ENCODE measurements at regions of chr21 and their contacts with region 1.

Region 1: GRCh38 chr21:38989745-38990423 is 184.2 kb downstream of the ETS2 start:
- DNase-seq: peak in 2 of 3 donors; percentile 65 to 75
- H3K4me3 ChIP-seq: peak overlapping the region in 2 of 7 experiments; percentile 6 to 7
- H3K27ac ChIP-seq: peak overlapping the region; percentile 98 to 99
- H3K4me1 ChIP-seq: peaks cover 39 to 98% (median 96%) of the 10 kb centered on the region in 4 experiments
- H3K27me3 ChIP-seq: no peaks in the 10 kb centered on the region

Region 2: DNA sequence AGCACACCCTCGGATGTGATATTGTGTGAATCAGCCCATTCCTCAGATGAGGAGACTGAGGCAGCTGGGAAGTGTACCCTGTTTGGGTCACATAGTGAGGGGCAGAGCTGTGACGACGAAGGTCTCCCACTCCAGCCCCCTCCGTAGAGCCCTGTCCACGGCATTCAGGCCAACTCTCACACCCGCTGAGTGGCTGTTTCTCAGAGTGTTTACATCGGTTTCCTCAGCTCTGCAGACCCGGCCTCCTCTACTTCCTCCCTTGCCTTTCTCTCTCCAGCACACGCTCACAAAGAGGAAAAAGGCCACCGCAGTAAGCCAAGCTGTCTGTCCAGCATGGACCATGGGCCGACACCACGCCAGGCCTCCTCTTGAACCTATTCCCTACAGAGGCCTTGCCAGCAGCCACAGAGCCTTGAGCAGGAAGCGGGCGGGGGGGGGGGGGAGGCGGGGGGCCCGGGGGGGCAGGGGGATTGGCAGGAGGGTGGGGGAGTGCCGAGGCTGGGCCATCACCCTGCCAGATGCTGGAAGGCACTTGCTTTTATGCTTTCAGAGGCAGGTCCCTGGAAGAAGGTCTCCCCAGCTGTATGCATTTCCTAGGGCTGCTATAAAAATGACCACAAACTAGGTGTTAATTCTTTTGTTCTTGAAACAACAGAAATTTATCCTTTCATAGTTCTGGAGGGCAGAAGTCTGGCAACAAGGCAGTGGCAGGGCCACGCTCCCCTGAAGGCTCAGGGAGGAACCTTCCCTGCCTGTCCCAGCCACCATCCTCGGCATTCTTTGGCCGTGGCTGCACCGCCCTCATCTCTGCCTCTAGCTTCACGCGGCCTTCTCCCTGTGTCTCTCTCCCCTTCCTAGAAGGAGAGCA is 15.0 kb after region 1 on chr21:
- CTCF ChIA-PET with region 1: interaction called, 12 read pairs
- POLR2A ChIA-PET with region 1: interaction called, 8 read pairs
- DNase-seq: peak; percentile 51 to 93 (median 88)
- H3K4me3 ChIP-seq: peak overlapping the region in 3 of 7 experiments; percentile 15 to 48 (median 45)
- H3K27ac ChIP-seq: peak overlapping the region; percentile 82 to 88
- H3K4me1 ChIP-seq: peaks cover 12 to 94% (median 75%) of the 10 kb centered on the region in 4 experiments
- H3K27me3 ChIP-seq: no peaks in the 10 kb centered on the region

Region 3: DNA sequence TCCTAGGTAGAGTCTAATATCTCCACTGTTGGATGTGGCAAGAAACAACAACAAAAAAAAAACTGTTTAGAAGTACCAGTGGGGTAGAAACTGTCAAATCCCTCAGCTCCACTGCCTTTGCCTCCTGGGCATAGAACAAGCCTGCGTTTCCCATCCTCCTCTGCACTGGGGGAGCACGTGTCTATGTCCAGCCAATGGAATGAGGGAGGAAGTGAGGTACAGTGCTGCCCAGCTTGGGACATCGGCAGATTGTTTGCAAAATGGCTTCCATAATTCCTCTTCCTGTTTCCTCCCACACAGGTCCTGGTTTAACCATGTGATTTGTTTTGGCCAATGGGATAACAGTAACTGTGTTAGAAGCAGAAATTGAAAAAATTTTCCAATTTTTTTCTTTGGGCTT is 154.3 kb after region 1 on chr21:
- CTCF ChIA-PET with region 1: no interaction called
- POLR2A ChIA-PET with region 1: no interaction called
- DNase-seq: no peak
- H3K4me3 ChIP-seq: no peak overlapping the region
- H3K27ac ChIP-seq: no peak overlapping the region
- H3K4me1 ChIP-seq: no peaks in the 10 kb centered on the region
- H3K27me3 ChIP-seq: no peaks in the 10 kb centered on the region